ENCODE measurements at regions of chr14 and their contacts with region 1.

Region 1: GRCh38 chr14:80055667-80056496 is 155.4 kb downstream of the DIO2 start:
- DNase-seq: peak; percentile 60

Region 2: DNA sequence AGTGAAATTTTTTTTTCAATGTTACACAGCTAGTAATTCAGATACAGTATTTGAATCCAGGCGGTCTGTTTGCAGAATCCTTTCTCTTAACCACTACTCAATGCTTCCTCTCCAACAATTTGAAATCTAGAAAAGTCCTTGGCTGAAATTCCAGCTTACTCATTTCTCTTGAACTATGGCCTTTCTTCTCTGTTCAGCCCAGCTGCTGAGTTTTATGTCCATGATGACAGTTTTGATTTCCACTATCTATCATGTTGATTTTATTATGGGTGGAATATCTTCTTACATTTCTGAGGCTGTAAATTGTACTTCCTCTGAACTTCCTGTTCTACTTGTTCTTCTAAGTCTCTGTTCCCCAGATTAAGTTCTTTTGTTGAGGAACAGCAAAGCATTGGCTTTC is 159.9 kb before region 1 on chr14:
- CTCF ChIA-PET with region 1: no interaction called
- POLR2A ChIA-PET with region 1: no interaction called
- DNase-seq: no peak

Region 3: GRCh38 chr14:80850197-80850814 is 794.4 kb after region 1 on chr14:
- CTCF ChIA-PET with region 1: interaction called, 10 read pairs
- POLR2A ChIA-PET with region 1: no interaction called
- DNase-seq: no peak